ENCODE measurements at regions of chr3 and their contacts with region 1.

Region 1: GRCh38 chr3:148889828-148890227 is 24.7 kb downstream of the CPA3 start:
- DNase-seq: no peak
- ATAC-seq: no peak
- H3K4me3 ChIP-seq: no peak overlapping the region
- H3K27ac ChIP-seq: no peak overlapping the region
- H3K4me1 ChIP-seq: no peaks in the 10 kb centered on the region
- H3K27me3 ChIP-seq: peaks cover 14% of the 10 kb centered on the region
- CTCF ChIP-seq: no peak

Region 2: GRCh38 chr3:148255981-148256969 is 633.6 kb before region 1 on chr3:
- CTCF ChIA-PET with region 1: no interaction called
- POLR2A ChIA-PET with region 1: no interaction called
- in situ Hi-C with region 1: no loop called
- intact Hi-C with region 1: no loop called
- DNase-seq: no peak
- ATAC-seq: no peak
- H3K4me3 ChIP-seq: no peak overlapping the region
- H3K27ac ChIP-seq: no peak overlapping the region
- H3K4me1 ChIP-seq: no peaks in the 10 kb centered on the region
- H3K27me3 ChIP-seq: no peaks in the 10 kb centered on the region
- CTCF ChIP-seq: no peak

Region 3: DNA sequence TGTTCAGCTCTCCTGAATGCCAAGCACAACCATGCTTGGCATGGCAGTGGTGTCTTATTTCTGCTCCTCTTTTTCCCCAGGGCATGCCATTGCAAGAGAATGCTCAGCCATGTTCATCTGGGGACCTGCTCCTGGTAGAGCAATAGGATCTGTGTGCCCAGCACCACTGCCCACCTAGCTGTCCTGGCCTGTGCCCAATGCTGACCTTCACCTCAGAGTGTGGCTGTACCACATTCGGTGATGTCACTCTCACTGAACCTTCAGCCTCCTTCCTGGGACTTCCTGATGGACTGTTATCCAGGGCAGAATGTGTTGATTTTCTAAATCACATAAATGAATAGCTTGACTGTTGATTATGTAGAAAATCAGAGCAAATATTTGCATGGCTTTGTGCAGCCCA is 150.1 kb before region 1 on chr3:
- CTCF ChIA-PET with region 1: no interaction called
- POLR2A ChIA-PET with region 1: interaction called, 12 read pairs
- in situ Hi-C with region 1: no loop called
- intact Hi-C with region 1: no loop called
- DNase-seq: no peak
- ATAC-seq: no peak
- H3K4me3 ChIP-seq: no peak overlapping the region
- H3K27ac ChIP-seq: no peak overlapping the region
- H3K4me1 ChIP-seq: no peaks in the 10 kb centered on the region
- H3K27me3 ChIP-seq: peaks cover 2% of the 10 kb centered on the region; the same call in 1 of the 2 replicates
- CTCF ChIP-seq: no peak

Measured in Panc1 (cell line).